Activated T-helper 2 cell treated with anti-CD3 and anti-CD28 coated beads, Interferon-gamma antibody, Interleukin-2, Interleukin-4, amounts not matched to agents 10 μg/mL and 5 μg/mL and 100 μg/mL, durations not matched to agents 14 hours and 24 hours and 36 hours (primary cell): ENCODE measurements at regions of chr1 and their contacts with region 1.

Region 1: DNA sequence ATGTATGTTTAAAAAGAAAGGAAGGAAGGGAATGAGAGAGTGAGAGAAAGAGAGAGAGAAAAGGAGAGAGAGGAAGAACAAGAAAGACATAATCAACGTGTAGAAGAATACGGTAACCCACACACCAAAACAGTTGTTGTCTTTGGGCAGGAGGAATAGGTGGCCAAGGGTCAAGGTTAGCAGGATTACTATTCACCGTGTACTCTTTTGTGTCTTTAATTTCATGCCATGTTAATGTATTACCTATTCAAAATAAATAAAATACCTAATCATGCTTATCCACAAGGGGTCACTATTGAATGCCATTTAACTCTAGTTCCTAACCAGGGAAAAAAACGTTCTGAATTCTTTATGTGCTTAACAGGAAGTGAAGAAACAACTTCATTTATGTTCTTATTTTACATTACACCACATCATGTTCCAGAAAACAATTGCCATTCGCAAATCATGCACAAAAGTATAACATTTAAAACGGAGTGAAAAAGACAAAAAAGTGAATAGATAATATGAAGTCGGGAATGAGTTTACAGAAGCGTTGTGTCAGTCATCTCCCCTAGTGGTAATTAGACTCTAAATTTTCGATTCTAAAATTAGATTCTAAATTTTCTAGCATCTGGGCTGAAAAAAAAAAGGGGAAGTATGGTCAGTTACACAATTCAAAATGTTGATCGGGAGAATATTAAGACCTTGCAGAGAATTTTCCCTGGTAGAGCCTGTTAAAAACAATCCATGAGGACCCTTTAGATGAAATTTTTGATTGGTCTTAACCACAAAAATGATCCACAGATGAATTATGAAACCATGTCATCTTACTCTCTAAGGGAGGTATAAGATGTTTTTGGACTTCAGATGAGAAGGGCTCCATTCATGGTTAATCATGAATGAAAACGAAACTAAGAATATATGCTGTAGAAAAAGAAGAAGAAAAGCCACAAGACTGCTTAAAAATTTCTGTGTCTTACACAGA is 700 bp upstream of the KMO start:
- DNase-seq: no peak
- H3K4me3 Mint-ChIP-seq: peak overlapping the region; percentile 94
- H3K27ac Mint-ChIP-seq: peak overlapping the region; percentile 94
- H3K4me1 Mint-ChIP-seq: peaks cover 22% of the 10 kb centered on the region
- H3K27me3 Mint-ChIP-seq: peaks cover 22% of the 10 kb centered on the region

Region 2: GRCh38 chr1:241356519-241357365 is 174.7 kb before region 1 on chr1 and contains the start of gene RGS7:
- intact Hi-C with region 1: no loop called
- DNase-seq: no peak
- H3K4me3 Mint-ChIP-seq: peak within 1 kb of the TSS; percentile 37
- H3K27ac Mint-ChIP-seq: no peak within 1 kb of the TSS
- H3K4me1 Mint-ChIP-seq: no peaks in the 10 kb centered on the region
- H3K27me3 Mint-ChIP-seq: peaks cover 30% of the 10 kb centered on the region
- total RNA-seq, gene RGS7: not detected in 2 replicates

Region 3: DNA sequence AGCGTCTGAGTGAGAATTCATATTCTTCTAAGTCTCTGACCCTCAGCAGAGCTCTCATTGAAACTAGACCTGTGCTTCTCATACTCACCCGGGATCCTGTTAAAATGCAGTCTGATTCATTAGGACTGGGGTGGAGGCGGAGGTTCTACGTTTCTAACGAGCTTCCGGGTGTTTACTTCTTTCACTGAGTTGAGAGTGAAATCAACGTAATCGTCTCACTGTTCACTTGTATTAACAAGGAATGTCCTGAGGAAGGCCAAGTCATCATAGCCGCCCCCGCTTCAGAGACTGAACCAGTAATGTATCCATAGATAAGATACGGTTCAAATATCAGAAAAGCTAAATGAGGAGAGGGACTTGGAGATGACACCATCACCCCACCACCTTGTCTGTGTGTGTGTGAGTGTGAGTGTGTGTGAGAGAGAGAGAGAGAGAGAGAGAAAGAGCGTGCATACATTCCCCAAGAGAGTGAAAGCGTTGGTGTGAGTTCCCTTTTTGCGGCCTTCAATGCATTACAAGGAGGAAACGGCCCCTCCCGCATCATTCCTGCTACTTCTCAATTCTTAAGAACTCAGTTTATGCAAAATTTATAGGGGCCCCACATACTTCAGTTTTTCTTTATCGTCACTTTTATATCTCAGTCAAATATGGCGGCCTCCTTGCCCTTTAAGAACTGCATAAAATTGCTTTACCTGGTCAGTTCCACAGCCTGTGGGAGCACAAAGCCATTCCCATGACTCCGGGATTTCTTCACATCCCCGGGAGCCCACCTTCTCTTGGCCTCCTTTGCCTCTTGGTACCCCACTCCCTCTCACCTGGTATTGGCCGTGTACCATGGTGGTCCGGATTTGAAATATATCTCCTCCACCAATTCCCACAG is 20.5 kb after region 1 on chr1:
- intact Hi-C with region 1: loop called (anchors 1 kb)
- DNase-seq: peak; percentile 19
- H3K4me3 Mint-ChIP-seq: peak overlapping the region; percentile 78
- H3K27ac Mint-ChIP-seq: peak overlapping the region; percentile 96
- H3K4me1 Mint-ChIP-seq: peaks cover 21% of the 10 kb centered on the region
- H3K27me3 Mint-ChIP-seq: peaks cover 10% of the 10 kb centered on the region

Region 4: DNA sequence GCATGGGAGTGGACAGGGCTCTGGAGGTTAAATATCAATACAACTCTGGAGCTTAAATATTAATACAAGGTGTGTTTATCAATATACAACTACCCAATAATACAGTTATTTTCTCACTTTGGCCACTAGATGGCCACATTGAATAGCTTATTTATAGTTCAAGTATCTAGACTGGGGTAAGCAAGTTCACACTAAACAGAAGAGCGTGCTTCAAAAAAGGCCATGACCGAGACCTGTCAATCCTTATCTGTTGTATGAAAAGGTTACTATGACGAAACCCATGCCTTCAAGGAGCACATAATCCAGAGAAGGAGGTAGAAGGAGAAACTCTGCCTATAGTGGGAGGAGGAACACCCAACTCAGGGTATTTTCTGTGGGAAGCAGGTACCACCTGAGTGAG is 79.6 kb after region 1 on chr1:
- intact Hi-C with region 1: loop called (anchors 5 kb)
- DNase-seq: no peak
- H3K4me3 Mint-ChIP-seq: no peak overlapping the region
- H3K27ac Mint-ChIP-seq: no peak overlapping the region
- H3K4me1 Mint-ChIP-seq: peaks cover 22% of the 10 kb centered on the region
- H3K27me3 Mint-ChIP-seq: no peaks in the 10 kb centered on the region

Region 5: DNA sequence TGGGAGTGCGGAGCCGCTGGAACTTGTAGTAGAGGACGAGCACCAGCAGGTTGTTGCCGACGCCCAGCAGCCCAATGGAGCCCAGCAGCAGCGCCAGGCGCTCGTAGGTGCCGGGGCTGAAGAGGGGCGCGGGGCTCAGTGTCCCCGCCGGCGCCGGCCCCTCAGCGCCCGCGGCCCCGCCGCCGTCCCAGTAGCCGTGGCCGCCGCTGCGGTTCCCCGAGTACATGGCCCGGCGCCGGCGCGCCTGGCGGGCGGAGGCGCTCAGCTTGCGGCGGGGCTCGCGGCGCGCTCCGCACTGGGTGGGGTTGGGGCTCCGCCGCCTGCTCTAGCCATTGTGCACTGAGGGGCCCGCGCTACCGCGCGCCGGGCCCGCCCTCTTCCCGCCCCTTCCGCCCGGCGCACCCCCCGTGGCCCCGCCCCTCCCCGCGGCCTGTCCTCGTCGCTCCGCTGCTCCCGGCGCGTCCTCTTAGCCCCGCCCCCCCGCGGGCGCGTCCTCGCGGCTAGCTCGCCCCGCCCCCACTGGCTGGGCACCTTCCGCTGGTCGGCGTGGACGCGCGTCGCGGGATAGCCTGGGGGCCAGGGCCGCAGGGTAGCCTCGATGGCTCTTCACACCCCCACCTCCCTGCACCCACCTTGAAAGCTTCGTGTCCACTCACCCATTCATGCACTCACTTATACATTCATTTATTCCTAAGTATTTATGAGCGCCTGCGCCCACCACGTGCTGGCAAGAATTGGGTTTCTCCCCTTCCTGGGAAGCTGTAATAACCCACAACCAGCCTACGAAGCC is 108.7 kb after region 1 on chr1 and contains the starts of genes CHML and OPN3:
- intact Hi-C with region 1: loop called (anchors 5 kb)
- DNase-seq: peak; percentile 89
- H3K4me3 Mint-ChIP-seq: peak within 1 kb of the TSS; percentile 89
- H3K27ac Mint-ChIP-seq: peak within 1 kb of the TSS; percentile 83
- H3K4me1 Mint-ChIP-seq: peaks cover 45% of the 10 kb centered on the region
- H3K27me3 Mint-ChIP-seq: no peaks in the 10 kb centered on the region
- total RNA-seq, gene CHML: 18.7 and 20.2 TPM in 2 replicates
- total RNA-seq, gene OPN3: 15.1 and 17.5 TPM in 2 replicates

Region 6: GRCh38 chr1:241985787-241986186 is 454.3 kb after region 1 on chr1:
- intact Hi-C with region 1: loop called (anchors 1 kb)
- DNase-seq: no peak
- H3K4me3 Mint-ChIP-seq: no peak overlapping the region
- H3K27ac Mint-ChIP-seq: no peak overlapping the region
- H3K4me1 Mint-ChIP-seq: no peaks in the 10 kb centered on the region
- H3K27me3 Mint-ChIP-seq: no peaks in the 10 kb centered on the region